GM18951 (cell line): ENCODE measurements at regions of chr1 and their contacts with region 1.

Region 1: DNA sequence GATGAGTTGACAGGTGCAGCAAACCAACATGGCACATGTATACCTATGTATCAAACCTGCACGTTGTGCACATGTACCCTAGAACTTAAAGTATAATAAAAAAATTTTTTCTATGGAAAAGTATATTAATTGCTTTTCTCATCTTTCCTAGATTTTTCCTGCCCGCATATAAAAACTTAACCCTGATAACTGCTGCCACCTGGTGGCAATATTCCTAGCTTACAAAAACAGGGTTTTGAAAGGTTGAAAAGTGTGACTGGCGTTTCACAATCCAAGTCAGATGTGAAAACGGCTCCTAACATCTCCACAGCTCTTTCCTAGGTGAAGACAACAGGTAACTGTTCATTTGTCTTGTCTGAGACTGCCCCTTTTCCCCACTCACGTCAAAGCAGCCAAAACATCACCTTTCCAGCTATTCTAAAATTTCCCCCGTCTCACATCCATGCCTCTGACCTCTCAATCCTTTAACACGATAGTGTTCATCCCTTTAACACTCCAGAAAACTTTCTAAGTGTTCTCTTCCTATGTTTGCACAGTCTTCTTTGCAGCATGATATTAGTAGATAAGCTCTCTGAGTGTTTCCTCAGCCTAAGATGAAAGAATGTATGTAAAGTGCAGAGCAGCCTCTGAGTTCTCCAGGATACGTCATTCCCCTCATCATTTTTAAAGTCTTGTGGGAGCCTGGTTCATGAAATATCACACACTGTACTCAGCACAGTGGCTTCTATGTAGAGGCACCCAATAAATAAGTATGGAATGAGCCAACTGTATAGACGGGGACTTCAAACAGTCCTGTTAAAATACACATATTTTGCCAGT is 27.5 kb downstream of the OVGP1 start:
- POLR2A ChIP-seq: no peak

Region 2: DNA sequence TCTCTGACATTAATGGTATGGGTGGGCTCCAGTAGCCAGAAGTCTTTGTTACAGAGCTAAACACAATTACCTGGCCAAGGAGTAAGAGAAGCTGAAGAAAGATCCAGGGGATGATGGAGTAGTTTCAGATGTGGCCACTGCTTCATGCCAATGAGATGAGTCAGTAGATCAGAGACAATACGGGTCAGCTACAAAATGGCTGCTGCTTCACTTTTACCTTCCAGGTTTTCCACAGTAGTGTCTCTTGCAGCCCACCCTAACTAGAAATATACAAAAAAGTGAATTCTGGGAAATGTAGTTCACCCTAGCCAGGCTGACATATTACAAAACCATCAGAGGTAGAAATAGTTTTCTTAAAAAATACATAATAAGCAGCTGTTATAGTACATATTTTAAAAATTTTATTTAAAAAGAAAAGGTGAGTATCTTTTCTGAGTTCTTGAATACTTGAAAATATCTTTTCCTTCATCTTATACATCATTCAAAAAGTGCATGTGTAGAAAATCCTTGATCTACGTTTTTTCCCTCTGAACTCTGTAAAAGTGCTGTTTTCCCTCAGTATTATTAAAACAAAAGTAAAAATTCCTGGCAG is 472.4 kb before region 1 on chr1:
- in situ Hi-C with region 1: no loop called
- POLR2A ChIP-seq: no peak

Region 3: GRCh38 chr1:111222308-111223125 is 177.5 kb before region 1 on chr1:
- in situ Hi-C with region 1: loop called (anchors 10 kb)
- POLR2A ChIP-seq: no peak

Region 4: GRCh38 chr1:111309690-111310089 is 90.3 kb before region 1 on chr1:
- in situ Hi-C with region 1: no loop called
- POLR2A ChIP-seq: no peak